Activated T-helper 1 cell treated with anti-CD3 and anti-CD28 coated beads, Interleukin-12 subunit alpha, Interleukin-12 subunit beta, Interleukin-2, Interleukin-4 antibody, amounts not matched to agents 30 ng/mL and 10 ng/mL and 1 ng/mL, durations not matched to agents 14 hours and 24 hours and 36 hours (primary cell): ENCODE measurements at regions of chr20 and their contacts with region 1.

Region 1: GRCh38 chr20:34876162-34877001 is at the start of gene ACSS2:
- DNase-seq: peak; percentile 95
- H3K4me3 Mint-ChIP-seq: peak within 1 kb of the TSS; percentile 96
- H3K27ac Mint-ChIP-seq: peak within 1 kb of the TSS; percentile 82
- H3K4me1 Mint-ChIP-seq: peaks cover 73% of the 10 kb centered on the region
- H3K27me3 Mint-ChIP-seq: peaks cover 4% of the 10 kb centered on the region
- total RNA-seq, gene ACSS2: 38.0 and 45.3 TPM in 2 replicates

Region 2: DNA sequence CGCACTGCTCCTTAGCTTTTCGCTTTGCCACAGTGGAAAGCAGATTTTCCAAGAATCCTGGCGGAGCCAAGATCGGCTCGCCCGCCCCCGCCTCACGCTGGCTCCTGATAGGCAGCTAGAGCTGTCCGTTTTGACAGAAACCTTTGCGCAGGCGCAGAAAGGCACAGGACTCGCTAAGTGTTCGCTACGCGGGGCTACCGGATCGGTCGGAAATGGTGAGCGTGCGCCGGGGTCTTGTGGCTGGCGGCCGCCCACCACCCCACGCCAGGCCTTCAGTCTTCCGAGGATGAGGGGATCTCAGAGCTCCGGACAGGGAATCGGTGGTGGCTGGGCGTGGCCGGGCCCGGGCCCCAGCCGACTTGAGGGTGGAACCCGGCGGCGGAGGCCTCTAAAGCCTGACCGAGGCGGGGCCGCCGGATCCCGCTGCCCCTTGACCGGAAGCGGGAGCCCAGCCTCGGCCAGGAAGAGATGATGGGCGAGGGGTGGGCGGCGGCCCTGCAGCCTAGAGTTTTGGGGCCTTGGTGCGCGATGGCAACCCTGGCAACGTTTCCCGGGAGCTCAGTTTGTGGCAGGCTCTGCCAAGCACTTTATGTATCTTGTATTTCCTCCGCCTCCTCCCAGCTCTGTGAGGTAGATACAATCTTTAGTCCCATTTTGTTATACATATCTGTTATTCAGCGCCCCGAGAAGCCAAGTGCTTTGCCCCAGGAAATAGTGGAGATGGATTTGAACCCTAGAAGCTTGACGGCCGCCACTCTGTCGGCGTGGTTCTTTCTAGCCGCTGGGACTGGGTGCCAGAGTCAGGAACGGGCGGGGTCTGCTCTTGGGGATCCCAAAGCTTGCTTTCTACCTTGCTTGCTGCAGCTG is 359.9 kb before region 1 on chr20 and contains the start of gene DYNLRB1:
- intact Hi-C with region 1: loop called (anchors 2 kb)
- DNase-seq: peak; percentile 93
- H3K4me3 Mint-ChIP-seq: peak within 1 kb of the TSS; percentile 95
- H3K27ac Mint-ChIP-seq: peak within 1 kb of the TSS; percentile 96
- H3K4me1 Mint-ChIP-seq: peaks cover 35% of the 10 kb centered on the region
- H3K27me3 Mint-ChIP-seq: no peaks in the 10 kb centered on the region
- total RNA-seq, gene DYNLRB1: 92.0 and 104 TPM in 2 replicates

Region 3: DNA sequence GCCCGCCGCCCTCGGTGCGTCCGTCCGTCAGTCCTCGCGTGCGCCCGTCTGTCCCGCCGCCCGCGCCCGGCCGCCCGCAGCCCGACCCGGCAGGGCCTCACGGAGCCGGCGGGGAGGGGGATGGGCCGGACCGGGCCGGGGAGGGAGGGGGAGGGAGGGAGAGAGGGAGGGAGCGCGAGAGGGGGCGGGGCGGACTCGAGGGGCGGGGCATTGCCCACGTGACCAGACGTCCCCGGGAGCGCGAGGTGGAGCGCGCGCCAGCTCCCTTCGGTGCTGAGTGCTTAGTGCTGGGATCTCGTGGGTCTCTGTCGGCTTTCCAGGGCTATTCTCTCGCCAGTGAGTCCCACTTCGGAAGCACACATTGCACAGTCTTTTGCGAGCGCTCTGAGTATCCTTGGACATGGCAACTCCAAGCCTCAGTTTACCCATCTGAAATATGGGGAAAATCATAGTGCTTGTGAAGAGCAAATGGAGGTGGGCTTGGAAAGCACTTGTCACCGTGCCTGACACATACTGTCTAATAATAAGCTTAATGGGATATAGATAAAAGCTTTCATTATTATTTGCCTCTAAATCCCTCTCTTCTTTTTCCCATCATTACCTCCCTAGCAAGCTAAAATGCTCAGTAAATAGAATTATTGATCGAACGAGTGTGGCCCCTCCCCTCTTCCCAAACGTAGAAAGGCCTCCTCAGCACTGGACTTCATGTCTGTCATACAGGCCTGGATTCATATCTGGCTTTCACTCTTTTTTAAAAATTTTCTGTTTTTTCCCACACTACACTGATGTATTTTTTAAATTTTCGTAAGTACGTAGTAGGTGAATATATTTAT is 50.6 kb before region 1 on chr20 and contains the start of gene NCOA6:
- intact Hi-C with region 1: loop called (anchors 1 kb)
- DNase-seq: peak; percentile 68
- H3K4me3 Mint-ChIP-seq: peak within 1 kb of the TSS; percentile 97
- H3K27ac Mint-ChIP-seq: peak within 1 kb of the TSS; percentile 91
- H3K4me1 Mint-ChIP-seq: peaks cover 30% of the 10 kb centered on the region
- H3K27me3 Mint-ChIP-seq: peaks cover 13% of the 10 kb centered on the region
- total RNA-seq, gene NCOA6: 25.5 and 29.1 TPM in 2 replicates

Region 4: GRCh38 chr20:34922654-34923424 is 46.5 kb after region 1 on chr20:
- intact Hi-C with region 1: loop called (anchors 1 kb)
- DNase-seq: no peak
- H3K4me3 Mint-ChIP-seq: no peak overlapping the region
- H3K27ac Mint-ChIP-seq: no peak overlapping the region
- H3K4me1 Mint-ChIP-seq: peaks cover 39% of the 10 kb centered on the region
- H3K27me3 Mint-ChIP-seq: no peaks in the 10 kb centered on the region

Region 5: GRCh38 chr20:35001596-35002362 is 125.4 kb after region 1 on chr20:
- intact Hi-C with region 1: loop called (anchors 5 kb)
- DNase-seq: no peak
- H3K4me3 Mint-ChIP-seq: no peak overlapping the region
- H3K27ac Mint-ChIP-seq: no peak overlapping the region
- H3K4me1 Mint-ChIP-seq: no peaks in the 10 kb centered on the region
- H3K27me3 Mint-ChIP-seq: no peaks in the 10 kb centered on the region

Region 6: DNA sequence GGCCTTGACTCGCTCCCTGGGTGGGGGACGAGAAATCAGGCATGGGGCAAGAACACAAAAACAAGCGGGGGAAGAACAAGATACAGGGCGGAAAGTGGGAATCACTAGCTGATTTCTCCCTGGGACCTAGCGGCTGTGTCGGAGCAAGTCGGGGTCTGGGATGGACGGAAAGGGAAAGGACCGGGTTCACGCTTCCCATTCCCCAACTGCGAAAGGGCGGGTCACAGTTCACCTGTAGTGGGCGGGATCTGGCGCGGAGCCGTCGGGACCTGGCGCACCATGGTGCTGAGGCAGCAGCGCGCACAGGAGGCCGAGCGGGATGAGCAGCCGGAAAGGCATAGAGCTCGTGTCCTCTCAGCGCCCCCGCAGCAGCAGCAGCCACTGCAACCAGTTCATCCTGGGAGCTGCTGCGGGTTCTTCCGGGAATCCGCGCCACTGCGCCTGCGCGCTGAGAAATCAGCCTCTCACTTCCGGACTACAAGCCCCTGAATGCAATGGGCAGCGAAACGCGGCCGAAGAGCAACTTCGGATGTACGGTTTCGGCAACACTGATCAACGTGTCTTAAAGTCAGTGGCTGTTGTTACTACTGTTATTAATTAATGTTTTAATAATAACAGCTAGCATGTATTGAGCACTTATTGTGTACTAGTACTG is 270.7 kb after region 1 on chr20 and contains the start of gene EDEM2:
- intact Hi-C with region 1: loop called (anchors 1 kb)
- DNase-seq: peak; percentile 93
- H3K4me3 Mint-ChIP-seq: peak within 1 kb of the TSS; percentile 93
- H3K27ac Mint-ChIP-seq: peak within 1 kb of the TSS; percentile 94
- H3K4me1 Mint-ChIP-seq: peaks cover 41% of the 10 kb centered on the region
- H3K27me3 Mint-ChIP-seq: peaks cover 9% of the 10 kb centered on the region
- total RNA-seq, gene EDEM2: 19.9 and 21.9 TPM in 2 replicates

Region 7: GRCh38 chr20:35277531-35278395 is 401.4 kb after region 1 on chr20 and contains the start of gene MMP24OS:
- intact Hi-C with region 1: loop called (anchors 5 kb)
- DNase-seq: peak; percentile 88
- H3K4me3 Mint-ChIP-seq: peak within 1 kb of the TSS; percentile 98
- H3K27ac Mint-ChIP-seq: peak within 1 kb of the TSS; percentile 99
- H3K4me1 Mint-ChIP-seq: peaks cover 18% of the 10 kb centered on the region
- H3K27me3 Mint-ChIP-seq: no peaks in the 10 kb centered on the region
- total RNA-seq, gene MMP24OS: 25.0 and 27.0 TPM in 2 replicates